Uterus (tissue), 4 donors: ENCODE measurements at regions of chr1 and their contacts with region 1.

Region 1: DNA sequence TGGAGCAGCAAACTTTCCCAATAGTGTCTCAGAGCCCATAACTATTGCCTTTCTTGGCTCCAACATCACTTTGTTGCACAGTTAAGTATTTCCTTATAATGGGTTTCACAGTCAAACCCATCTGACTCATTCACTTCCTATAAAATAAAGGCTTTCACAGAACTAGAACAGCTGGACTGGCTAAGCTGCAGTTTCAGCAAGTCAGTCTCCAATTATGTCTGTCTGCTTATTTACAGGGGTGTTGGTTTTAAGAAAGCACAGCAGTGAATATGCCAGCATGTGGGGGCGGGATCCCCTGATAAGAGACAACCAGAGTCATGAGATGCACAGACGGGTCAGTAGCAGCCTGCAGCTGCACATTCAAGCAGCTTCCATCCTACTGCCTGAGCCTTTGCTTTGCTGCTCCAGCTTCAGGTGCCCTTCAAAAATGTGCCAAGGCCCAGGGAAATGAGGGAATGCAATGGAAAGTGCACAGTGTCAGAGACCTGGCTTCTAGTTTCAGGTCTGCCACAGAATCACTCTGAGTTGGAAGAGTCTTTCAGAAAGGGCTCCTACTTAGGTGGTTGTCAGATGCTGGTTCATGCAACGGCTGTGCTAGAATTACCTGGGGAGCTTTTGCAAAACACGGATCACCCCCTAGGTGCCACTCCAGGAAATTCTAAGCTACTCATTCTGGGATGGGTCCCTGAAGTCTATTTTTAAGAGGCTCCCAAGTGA is 24.8 kb downstream of the RNF19B start:
- DNase-seq: peak; percentile 76 to 81
- H3K4me3 ChIP-seq: no peak overlapping the region
- H3K27ac ChIP-seq: peak overlapping the region; percentile 59 to 66
- H3K4me1 ChIP-seq: peaks cover 0 to 5% of the 10 kb centered on the region in 2 donors
- H3K27me3 ChIP-seq: no peaks in the 10 kb centered on the region
- CTCF ChIP-seq: no peak
- POLR2A ChIP-seq: peak in 1 of 2 donors; percentile 35

Region 2: DNA sequence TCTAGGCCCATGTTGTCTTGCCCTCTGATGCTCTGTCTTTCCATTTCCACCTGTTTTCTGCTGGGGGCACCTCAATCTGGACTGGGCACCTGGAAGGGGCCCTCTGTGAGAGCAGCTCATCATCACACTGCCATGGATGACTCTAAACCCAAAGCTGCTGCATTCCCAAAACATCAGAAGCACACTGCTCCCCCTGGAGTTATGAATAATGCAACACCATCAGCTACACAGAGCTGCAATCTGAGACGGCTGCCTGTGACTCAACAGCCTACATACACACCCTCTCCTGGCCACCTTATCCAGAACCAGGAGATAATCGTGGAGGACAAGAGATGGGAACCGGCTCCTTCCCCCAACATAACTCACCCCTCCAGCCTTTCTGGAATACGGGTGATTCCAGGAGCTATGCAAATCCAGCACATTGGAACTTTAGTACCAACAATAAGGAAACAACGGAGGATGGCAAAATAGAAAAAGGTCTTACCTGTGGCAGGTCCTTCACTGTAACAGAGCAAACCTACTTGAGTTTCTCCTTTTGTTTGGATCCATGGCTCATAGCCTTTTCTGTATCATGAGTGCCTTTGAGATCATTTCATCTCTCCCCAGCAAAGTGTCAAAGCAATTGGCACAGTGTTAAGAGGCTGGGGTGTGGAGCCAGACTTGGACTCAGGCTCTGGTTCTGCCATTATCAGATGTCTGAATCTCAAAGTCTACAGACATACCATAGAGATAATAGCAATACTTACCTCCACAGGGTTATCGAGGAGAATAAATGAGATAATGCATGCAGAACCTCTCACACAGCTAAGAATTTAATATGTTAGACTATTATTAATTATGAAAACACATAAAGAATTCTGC is 67.6 kb after region 1 on chr1:
- intact Hi-C with region 1: loop called (anchors 10 kb)
- DNase-seq: peak; percentile 28 to 54
- H3K4me3 ChIP-seq: no peak overlapping the region
- H3K27ac ChIP-seq: no peak overlapping the region
- H3K4me1 ChIP-seq: no peaks in the 10 kb centered on the region
- H3K27me3 ChIP-seq: no peaks in the 10 kb centered on the region
- CTCF ChIP-seq: peak; percentile 16 to 57 (median 48)
- POLR2A ChIP-seq: no peak

Region 3: DNA sequence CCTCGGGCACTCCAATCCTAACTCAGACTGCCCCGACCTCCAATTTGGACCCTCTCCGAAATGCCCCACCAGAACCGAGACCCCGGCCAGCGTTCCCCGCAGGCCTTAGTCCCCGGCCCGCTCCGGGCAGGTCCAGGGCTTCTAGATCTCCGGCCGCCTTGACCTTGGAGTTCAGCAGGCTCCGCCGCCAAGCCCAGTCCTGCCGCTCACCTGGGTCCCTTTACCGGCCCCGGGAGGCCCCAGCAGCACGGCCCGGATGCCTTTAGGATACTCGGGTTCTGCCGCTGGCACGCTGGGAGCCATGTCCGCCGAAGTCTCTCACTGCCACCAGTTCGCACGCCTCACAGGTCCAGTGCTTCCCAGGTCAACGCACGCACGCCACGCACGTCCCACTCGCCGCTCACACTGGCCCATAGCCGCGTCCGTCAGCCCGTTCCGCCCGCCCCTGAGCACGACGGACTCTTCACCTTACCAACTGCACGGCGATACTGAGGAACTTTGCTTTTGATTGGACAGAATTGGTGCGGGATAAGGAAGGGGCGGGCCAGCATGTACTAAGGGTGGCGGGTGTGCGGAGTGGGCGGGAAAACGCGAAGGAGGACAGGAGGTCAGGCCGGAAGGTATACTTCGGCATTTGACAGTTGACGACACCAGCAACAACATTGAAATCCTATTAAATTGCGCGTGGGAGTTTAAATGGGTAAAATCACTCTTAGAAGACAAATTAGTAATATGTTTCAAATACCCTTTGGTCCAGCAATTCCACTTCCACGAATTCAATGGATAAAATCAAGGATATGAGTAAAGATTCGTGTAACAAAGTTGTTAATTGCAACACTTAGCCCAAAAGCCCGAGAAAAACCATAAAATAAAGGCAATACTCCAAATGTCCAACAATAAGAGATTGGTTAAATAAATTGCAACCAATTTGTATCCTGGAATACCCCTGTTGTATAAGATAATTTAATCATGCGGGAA is 97.0 kb after region 1 on chr1 and contains the start of gene AK2:
- intact Hi-C with region 1: loop called (anchors 10 kb)
- DNase-seq: peak; percentile 94 to 95
- H3K4me3 ChIP-seq: peak within 1 kb of the TSS; percentile 80 to 96
- H3K27ac ChIP-seq: peak within 1 kb of the TSS; percentile 74 to 80
- H3K4me1 ChIP-seq: peaks cover 0 to 4% of the 10 kb centered on the region in 2 donors
- H3K27me3 ChIP-seq: no peaks in the 10 kb centered on the region
- CTCF ChIP-seq: no peak
- POLR2A ChIP-seq: peak; percentile 56 to 70
- total RNA-seq, gene AK2: 47.6 to 126 (median 89.2) TPM

Region 4: DNA sequence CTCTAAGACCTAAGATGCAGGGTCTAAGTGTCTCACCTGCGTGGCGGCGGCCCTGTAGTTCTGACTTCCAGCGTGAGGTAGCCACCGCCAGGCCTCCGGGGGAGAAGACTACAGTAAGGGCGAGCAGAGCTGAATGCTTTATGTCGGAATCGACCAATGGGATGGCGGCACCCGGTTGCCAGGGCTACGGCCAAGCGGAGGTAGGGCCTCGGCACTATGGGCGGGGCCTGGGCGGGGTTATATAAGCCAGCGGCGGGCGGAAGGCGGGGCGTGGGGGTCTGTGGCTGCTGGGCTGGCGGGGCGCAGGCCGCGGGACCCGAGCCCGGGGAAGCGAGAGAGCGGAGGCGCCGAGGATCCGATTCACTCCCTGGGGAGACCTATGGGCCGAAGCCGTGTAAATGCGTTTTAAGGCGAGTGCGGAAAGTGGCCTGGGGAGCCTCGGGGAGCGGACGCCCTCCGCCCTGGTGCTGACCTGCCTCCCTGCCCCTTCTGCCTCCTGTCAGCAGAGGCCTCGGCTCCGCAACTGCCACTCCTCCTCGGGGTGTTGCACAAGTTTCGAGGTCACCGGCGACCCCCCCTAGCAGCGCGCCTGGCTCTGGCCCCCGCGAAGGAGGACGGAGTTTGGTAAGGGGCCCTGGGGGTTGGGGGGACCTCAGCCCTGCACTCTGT is 141.2 kb after region 1 on chr1 and contains the start of gene AZIN2:
- intact Hi-C with region 1: loop called (anchors 10 kb)
- DNase-seq: peak; percentile 97 to 98
- H3K4me3 ChIP-seq: peak within 1 kb of the TSS; percentile 55 to 57
- H3K27ac ChIP-seq: peak within 1 kb of the TSS in 1 of 2 donors; percentile 64
- H3K4me1 ChIP-seq: no peaks in the 10 kb centered on the region
- H3K27me3 ChIP-seq: no peaks in the 10 kb centered on the region
- CTCF ChIP-seq: peak in 1 of 4 experiments; percentile 2
- POLR2A ChIP-seq: peak; percentile 86 to 88
- total RNA-seq, gene AZIN2: 1.2 to 16.1 (median 6.9) TPM